ENCODE measurements at regions of chr6 and their contacts with region 1.

Region 1: GRCh38 chr6:34544776-34545471 is 11.2 kb downstream of the SPDEF start:
- DNase-seq: no peak

Region 2: DNA sequence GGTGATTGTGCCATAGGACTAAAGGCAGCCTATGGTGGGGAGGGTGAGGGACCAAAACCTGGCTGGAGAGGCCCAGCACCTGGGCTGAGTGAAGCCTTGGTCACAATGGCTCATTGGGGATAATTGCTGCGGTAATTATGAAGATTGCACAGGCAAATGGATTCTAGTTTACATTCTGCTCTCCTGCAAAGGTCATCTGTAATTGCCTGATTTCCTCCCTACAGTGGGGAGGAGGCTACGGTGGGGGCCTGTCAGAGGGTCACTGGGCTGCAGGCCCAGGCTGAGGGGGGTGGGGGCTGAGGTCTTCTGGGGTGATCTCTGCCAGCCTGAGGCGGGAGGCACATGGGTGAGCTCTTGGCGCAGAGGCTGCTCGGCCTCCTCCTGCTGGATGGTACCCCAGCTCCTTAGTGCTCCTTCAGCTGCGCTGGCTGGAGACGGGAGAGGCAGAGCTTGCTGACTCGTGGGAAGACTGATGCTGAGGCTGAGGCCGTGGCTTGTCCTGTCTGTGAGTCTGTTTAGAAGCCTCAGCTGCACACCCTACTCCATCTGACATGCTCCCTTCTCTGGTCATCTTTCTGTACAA is 48.7 kb before region 1 on chr6:
- intact Hi-C with region 1: loop called in 1 of 2 experiments (anchors 1 kb)
- DNase-seq: peak; percentile 77

Region 3: GRCh38 chr6:35280903-35281302 is 736.0 kb after region 1 on chr6:
- intact Hi-C with region 1: no loop called
- DNase-seq: no peak